ENCODE measurements at regions of chr2 and their contacts with region 1.

Region 1: GRCh38 chr2:88711903-88712302 is 20.4 kb downstream of the RPIA start:
- DNase-seq: no peak
- H3K4me3 ChIP-seq: no peak overlapping the region
- H3K27ac ChIP-seq: no peak overlapping the region
- H3K4me1 ChIP-seq: no peaks in the 10 kb centered on the region
- H3K27me3 ChIP-seq: no peaks in the 10 kb centered on the region

Region 2: GRCh38 chr2:88698498-88699233 is 13.2 kb before region 1 on chr2:
- CTCF ChIA-PET with region 1: interaction called, 15 read pairs
- POLR2A ChIA-PET with region 1: no interaction called
- DNase-seq: no peak
- H3K4me3 ChIP-seq: no peak overlapping the region
- H3K27ac ChIP-seq: no peak overlapping the region
- H3K4me1 ChIP-seq: peaks cover 1 to 11% (median 7%) of the 10 kb centered on the region in 4 experiments
- H3K27me3 ChIP-seq: no peaks in the 10 kb centered on the region

Measured in common myeloid progenitor, CD34-positive (primary cell).